ENCODE measurements at regions of chr2 and their contacts with region 1.

Region 1: GRCh38 chr2:181742922-181743722 is 62.8 kb upstream of the NEUROD1 start:
- DNase-seq: no peak
- H3K4me3 ChIP-seq: no peak overlapping the region
- H3K27ac ChIP-seq: no peak overlapping the region
- H3K4me1 ChIP-seq: peaks cover 0 to 10% (median 0%) of the 10 kb centered on the region in 6 donors
- H3K27me3 ChIP-seq: no peaks in the 10 kb centered on the region
- CTCF ChIP-seq: peak in 10 of 11 experiments; percentile 44 to 78 (median 60)
- POLR2A ChIP-seq: no peak

Region 2: DNA sequence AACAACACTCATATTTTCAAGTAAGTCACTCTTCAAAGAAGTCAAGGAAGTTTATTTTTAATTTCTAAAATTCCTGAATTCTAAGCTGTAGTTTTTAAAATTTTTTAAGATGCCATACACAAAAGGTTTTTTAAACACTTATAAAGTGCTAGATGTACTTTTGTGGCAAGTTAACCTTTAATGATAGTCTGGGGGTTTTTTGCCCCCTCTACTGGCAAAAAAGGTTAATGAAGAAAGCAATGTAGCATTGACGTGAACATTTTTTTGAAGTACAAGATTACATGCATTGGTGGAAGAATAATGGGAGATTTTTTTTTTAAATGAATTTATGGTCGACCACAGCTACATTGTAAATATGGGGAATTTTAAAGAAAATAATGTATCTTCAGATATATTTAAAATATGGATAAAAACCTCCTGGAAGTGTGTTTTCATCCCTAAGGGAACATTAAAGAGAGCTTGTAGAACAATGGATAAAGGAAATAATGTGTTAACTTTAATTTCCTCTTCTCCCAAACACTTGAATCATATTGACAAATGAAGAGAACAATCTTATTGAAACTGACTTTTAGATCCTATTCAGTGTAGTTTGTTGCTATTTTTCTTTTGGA is 161.0 kb after region 1 on chr2:
- intact Hi-C with region 1: loop called (anchors 5 kb)
- DNase-seq: no peak
- H3K4me3 ChIP-seq: no peak overlapping the region
- H3K27ac ChIP-seq: peak overlapping the region in 1 of 8 donors; percentile 30
- H3K4me1 ChIP-seq: peaks cover 7 to 95% (median 43%) of the 10 kb centered on the region in 6 donors
- H3K27me3 ChIP-seq: no peaks in the 10 kb centered on the region
- CTCF ChIP-seq: peak in 10 of 11 experiments; percentile 26 to 69 (median 54)
- POLR2A ChIP-seq: no peak

Region 3: GRCh38 chr2:182077451-182078142 is 334.5 kb after region 1 on chr2:
- intact Hi-C with region 1: loop called (anchors 5 kb)
- DNase-seq: no peak
- H3K4me3 ChIP-seq: no peak overlapping the region
- H3K27ac ChIP-seq: no peak overlapping the region
- H3K4me1 ChIP-seq: peaks cover 0 to 5% (median 0%) of the 10 kb centered on the region in 6 donors
- H3K27me3 ChIP-seq: peaks cover 0 to 8% (median 0%) of the 10 kb centered on the region in 7 donors
- CTCF ChIP-seq: peak in 8 of 11 experiments; percentile 16 to 53 (median 36)
- POLR2A ChIP-seq: no peak